ENCODE measurements at regions of chr1 and their contacts with region 1.

Region 1: GRCh38 chr1:26284597-26285360 is 4.9 kb downstream of the SH3BGRL3 start:
- DNase-seq: peak; percentile 100
- ATAC-seq: peak; percentile 61
- H3K4me3 Mint-ChIP-seq: peak overlapping the region; percentile 88
- H3K27ac Mint-ChIP-seq: peak overlapping the region; percentile 99
- H3K4me1 Mint-ChIP-seq: peaks cover 85% of the 10 kb centered on the region
- H3K27me3 Mint-ChIP-seq: no peaks in the 10 kb centered on the region
- CTCF ChIP-seq: peak; percentile 72

Region 2: GRCh38 chr1:26190373-26190987 is 94.3 kb before region 1 on chr1 and contains the start of gene CATSPER4:
- CTCF ChIA-PET with region 1: no interaction called
- POLR2A ChIA-PET with region 1: no interaction called
- intact Hi-C with region 1: no loop called
- DNase-seq: no peak
- ATAC-seq: no peak
- H3K4me3 Mint-ChIP-seq: no peak within 1 kb of the TSS
- H3K27ac Mint-ChIP-seq: peak within 1 kb of the TSS; percentile 19
- H3K4me1 Mint-ChIP-seq: peaks cover 6% of the 10 kb centered on the region
- H3K27me3 Mint-ChIP-seq: no peaks in the 10 kb centered on the region
- CTCF ChIP-seq: no peak
- total RNA-seq, gene CATSPER4: not detected

Region 3: GRCh38 chr1:26263212-26263611 is 21.6 kb before region 1 on chr1:
- CTCF ChIA-PET with region 1: no interaction called
- POLR2A ChIA-PET with region 1: no interaction called
- intact Hi-C with region 1: no loop called
- DNase-seq: no peak
- ATAC-seq: no peak
- H3K4me3 Mint-ChIP-seq: no peak overlapping the region
- H3K27ac Mint-ChIP-seq: no peak overlapping the region
- H3K4me1 Mint-ChIP-seq: peaks cover 7% of the 10 kb centered on the region
- H3K27me3 Mint-ChIP-seq: no peaks in the 10 kb centered on the region
- CTCF ChIP-seq: no peak

Region 4: GRCh38 chr1:26300586-26301275 is 16.0 kb after region 1 on chr1:
- CTCF ChIA-PET with region 1: interaction called, 46 read pairs
- POLR2A ChIA-PET with region 1: interaction called, 77 read pairs
- intact Hi-C with region 1: no loop called
- DNase-seq: no peak
- ATAC-seq: no peak
- H3K4me3 Mint-ChIP-seq: no peak overlapping the region
- H3K27ac Mint-ChIP-seq: peak overlapping the region; percentile 55
- H3K4me1 Mint-ChIP-seq: peaks cover 5% of the 10 kb centered on the region
- H3K27me3 Mint-ChIP-seq: no peaks in the 10 kb centered on the region
- CTCF ChIP-seq: no peak

Region 5: GRCh38 chr1:26306290-26307229 is 21.8 kb after region 1 on chr1 and contains the start of gene UBXN11:
- CTCF ChIA-PET with region 1: interaction called, 46 read pairs
- POLR2A ChIA-PET with region 1: interaction called, 77 read pairs
- intact Hi-C with region 1: no loop called
- DNase-seq: peak; percentile 98
- ATAC-seq: peak; percentile 98
- H3K4me3 Mint-ChIP-seq: peak within 1 kb of the TSS; percentile 86
- H3K27ac Mint-ChIP-seq: peak within 1 kb of the TSS; percentile 93
- H3K4me1 Mint-ChIP-seq: peaks cover 22% of the 10 kb centered on the region
- H3K27me3 Mint-ChIP-seq: no peaks in the 10 kb centered on the region
- CTCF ChIP-seq: no peak
- total RNA-seq, gene UBXN11: 24.9 to 26.0 TPM

Region 6: GRCh38 chr1:26315874-26316850 is 31.4 kb after region 1 on chr1:
- CTCF ChIA-PET with region 1: interaction called, 282 read pairs
- POLR2A ChIA-PET with region 1: interaction called, 284 read pairs
- intact Hi-C with region 1: loop called (anchors 2 kb)
- DNase-seq: no peak
- ATAC-seq: no peak
- H3K4me3 Mint-ChIP-seq: no peak overlapping the region
- H3K27ac Mint-ChIP-seq: peak overlapping the region; percentile 74
- H3K4me1 Mint-ChIP-seq: peaks cover 48% of the 10 kb centered on the region
- H3K27me3 Mint-ChIP-seq: no peaks in the 10 kb centered on the region
- CTCF ChIP-seq: no peak

Region 7: DNA sequence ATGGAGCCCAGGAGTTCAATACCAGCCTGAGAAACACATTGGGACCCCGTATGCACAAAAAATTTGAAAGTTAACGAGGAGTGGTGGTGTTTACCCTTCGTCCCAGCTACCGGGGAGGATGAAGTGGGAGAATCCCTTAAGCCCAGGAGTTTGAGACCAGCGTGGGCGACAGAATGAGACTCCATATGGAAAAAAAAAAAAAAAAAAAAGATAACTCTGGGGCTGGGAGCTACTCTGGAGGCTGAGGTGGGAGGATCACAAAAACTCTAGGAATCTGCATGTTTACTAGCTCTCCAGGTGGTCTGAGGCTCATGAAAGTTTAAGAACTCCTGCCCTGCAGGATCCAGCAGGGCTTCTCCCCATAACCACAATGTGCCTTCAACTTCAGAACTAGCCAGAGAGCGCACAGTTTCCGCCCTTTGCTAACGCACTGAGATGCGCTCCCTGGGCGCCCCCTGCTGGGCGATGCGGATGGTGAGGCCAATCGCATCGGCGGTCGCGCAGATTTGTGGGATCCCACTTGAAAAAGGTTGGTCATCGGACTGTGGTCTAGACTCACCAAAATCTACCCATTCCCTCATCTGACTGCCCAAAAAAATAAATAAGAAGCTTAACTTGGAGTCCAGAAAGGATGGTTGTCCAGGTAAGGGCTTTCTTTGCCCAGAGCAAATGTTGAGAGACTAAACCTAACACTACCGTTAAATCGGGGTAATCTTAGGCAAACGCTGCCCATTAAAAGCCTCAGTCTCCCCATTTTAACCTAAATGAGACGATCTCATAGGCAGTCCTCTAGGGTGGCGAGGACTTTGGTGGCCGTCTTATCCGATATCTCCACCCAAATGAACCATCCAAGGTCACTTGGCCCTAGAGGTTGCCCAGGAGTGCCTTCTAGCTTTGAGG is 79.0 kb after region 1 on chr1:
- CTCF ChIA-PET with region 1: interaction called, 23 read pairs
- POLR2A ChIA-PET with region 1: interaction called, 3 read pairs
- intact Hi-C with region 1: no loop called
- DNase-seq: peak; percentile 94
- ATAC-seq: peak; percentile 70
- H3K4me3 Mint-ChIP-seq: no peak overlapping the region
- H3K27ac Mint-ChIP-seq: no peak overlapping the region
- H3K4me1 Mint-ChIP-seq: peaks cover 43% of the 10 kb centered on the region
- H3K27me3 Mint-ChIP-seq: peaks cover 17% of the 10 kb centered on the region
- CTCF ChIP-seq: peak; percentile 98

Region 8: GRCh38 chr1:26378088-26378878 is 93.5 kb after region 1 on chr1:
- CTCF ChIA-PET with region 1: interaction called, 13 read pairs
- POLR2A ChIA-PET with region 1: interaction called, 5 read pairs
- intact Hi-C with region 1: no loop called
- DNase-seq: peak; percentile 91
- ATAC-seq: peak; percentile 96
- H3K4me3 Mint-ChIP-seq: peak overlapping the region; percentile 33
- H3K27ac Mint-ChIP-seq: peak overlapping the region; percentile 82
- H3K4me1 Mint-ChIP-seq: peaks cover 59% of the 10 kb centered on the region
- H3K27me3 Mint-ChIP-seq: no peaks in the 10 kb centered on the region
- CTCF ChIP-seq: no peak

Measured in activated CD8-positive, alpha-beta T cell treated with anti-CD3 and anti-CD28 coated beads for 36 hours (primary cell).